ENCODE measurements at regions of chr3 and their contacts with region 1.

Region 1: DNA sequence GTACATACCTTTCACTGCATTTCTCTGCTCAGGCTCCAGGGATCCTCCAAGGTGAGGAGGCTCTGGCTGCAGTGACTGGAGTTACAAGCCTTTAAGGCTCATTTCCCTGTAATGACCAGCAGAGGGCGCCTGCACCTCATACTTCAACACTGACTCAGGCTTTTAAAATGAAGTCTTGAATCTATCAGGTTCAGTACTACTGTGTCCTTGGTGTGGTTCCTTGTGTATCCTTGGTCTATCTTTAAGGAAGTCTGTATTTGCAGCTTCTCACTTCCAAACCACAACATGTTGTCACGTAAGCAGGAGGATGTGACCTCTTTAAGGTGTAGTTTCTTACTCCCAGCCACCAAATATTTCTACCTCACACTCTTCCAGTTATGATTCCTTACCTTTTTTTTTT is 122.5 kb upstream of the ZBED2 start:
- DNase-seq: peak; percentile 27 to 83 (median 69)
- ATAC-seq: peak; percentile 90
- H3K4me3 ChIP-seq: no peak overlapping the region
- H3K4me3 Mint-ChIP-seq: no peak overlapping the region
- H3K27ac ChIP-seq: no peak overlapping the region
- H3K27ac Mint-ChIP-seq: no peak overlapping the region
- H3K4me1 ChIP-seq: no peaks in the 10 kb centered on the region
- H3K4me1 Mint-ChIP-seq: peaks cover 3% of the 10 kb centered on the region
- H3K27me3 ChIP-seq: no peaks in the 10 kb centered on the region
- H3K27me3 Mint-ChIP-seq: no peaks in the 10 kb centered on the region
- CTCF ChIP-seq: peak; percentile 77

Region 2: DNA sequence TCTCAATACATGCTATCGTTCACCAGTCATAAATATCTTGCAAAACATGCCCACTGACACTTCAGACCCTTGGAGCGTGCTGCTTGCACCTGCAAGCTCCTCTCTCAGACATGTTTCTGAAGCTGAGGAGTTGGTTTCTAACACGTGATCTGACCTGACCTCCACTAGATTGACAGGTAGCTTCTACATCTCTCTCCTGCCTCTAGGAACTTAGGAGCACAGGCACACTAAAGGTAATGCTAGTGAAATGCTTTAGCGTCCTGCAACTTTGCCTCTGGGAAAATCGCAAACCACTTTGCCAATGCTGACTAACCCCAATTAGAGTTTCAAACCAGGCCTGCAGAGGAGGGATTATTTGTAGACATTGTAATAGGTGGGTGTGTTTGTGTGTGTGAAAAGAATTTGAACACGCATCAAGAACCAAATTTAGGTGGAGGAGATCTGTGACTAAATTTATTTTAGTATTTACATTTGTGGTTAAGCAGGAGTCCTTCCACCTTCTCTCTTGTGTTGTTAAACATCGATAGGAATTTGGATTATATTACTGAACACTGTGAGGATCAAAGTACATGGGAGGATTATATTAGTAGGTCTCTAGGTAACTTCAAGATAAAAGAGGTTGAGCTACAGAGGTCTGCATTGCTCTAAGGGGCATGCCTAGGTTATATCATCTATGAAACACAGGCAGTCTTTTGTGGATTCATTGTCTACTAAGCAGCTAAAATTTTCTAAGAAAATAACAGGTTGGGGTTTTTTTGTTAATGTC is 35.8 kb before region 1 on chr3:
- CTCF ChIA-PET with region 1: interaction called, 14 read pairs
- POLR2A ChIA-PET with region 1: interaction called, 3 read pairs
- intact Hi-C with region 1: no loop called
- DNase-seq: no peak
- ATAC-seq: no peak
- H3K4me3 ChIP-seq: no peak overlapping the region
- H3K4me3 Mint-ChIP-seq: no peak overlapping the region
- H3K27ac ChIP-seq: no peak overlapping the region
- H3K27ac Mint-ChIP-seq: no peak overlapping the region
- H3K4me1 ChIP-seq: peaks cover 24% of the 10 kb centered on the region
- H3K4me1 Mint-ChIP-seq: peaks cover 76% of the 10 kb centered on the region
- H3K27me3 ChIP-seq: no peaks in the 10 kb centered on the region
- H3K27me3 Mint-ChIP-seq: no peaks in the 10 kb centered on the region
- CTCF ChIP-seq: no peak

Region 3: GRCh38 chr3:111700054-111700453 is 17.5 kb before region 1 on chr3:
- CTCF ChIA-PET with region 1: interaction called, 67 read pairs
- POLR2A ChIA-PET with region 1: interaction called, 3 read pairs
- intact Hi-C with region 1: no loop called
- DNase-seq: no peak
- ATAC-seq: no peak
- H3K4me3 ChIP-seq: no peak overlapping the region
- H3K4me3 Mint-ChIP-seq: peak overlapping the region; percentile 3
- H3K27ac ChIP-seq: no peak overlapping the region
- H3K27ac Mint-ChIP-seq: no peak overlapping the region
- H3K4me1 ChIP-seq: peaks cover 5% of the 10 kb centered on the region
- H3K4me1 Mint-ChIP-seq: peaks cover 36% of the 10 kb centered on the region
- H3K27me3 ChIP-seq: no peaks in the 10 kb centered on the region
- H3K27me3 Mint-ChIP-seq: no peaks in the 10 kb centered on the region
- CTCF ChIP-seq: no peak

Region 4: DNA sequence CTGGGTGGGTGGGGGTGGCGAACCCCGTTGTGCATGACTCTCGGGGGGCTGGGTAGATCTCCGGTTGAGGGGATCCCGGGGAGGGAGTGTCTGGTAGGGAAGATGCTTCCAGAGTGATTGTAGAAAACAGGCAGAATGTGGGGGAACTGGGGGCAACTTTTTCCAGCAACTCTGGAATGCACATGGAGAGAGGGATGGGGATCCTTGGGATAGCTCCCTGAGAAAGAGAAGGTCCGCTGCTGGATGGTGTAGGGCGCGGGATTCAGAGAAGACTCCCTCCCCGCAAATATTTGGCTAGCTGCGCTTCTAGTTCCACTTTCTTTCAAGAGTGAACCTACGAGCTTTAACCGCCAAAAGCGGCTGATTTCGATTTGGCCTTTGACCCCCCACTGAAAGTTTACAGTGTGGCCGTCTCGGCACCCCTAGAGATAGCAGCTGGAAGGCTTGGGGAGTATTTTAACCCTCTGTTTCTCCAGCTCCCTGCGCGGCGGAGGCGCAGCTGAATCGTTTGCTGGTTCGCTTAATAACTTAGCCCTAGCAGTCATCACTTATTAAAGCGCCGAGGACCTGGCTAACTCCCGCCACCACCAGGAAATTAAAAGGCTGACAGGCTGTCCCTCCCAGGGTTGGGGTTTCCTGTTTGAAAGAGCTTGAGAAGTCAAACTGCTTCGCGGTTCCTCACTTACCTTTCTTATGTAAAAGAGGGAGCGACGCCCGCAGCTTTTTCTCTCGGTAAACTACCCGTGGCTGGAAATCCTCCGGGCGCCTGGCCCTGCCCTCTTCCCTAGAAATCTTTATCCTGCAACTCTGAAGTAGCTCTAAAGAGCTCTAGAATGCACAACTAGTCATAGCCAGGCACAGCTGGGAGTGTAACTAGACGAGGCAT is 142.6 kb after region 1 on chr3:
- CTCF ChIA-PET with region 1: interaction called, 11 read pairs
- POLR2A ChIA-PET with region 1: interaction called, 5 read pairs
- intact Hi-C with region 1: loop called in 1 of 2 experiments (anchors 10 kb)
- DNase-seq: peak; percentile 10 to 86 (median 48)
- ATAC-seq: peak; percentile 39
- H3K4me3 ChIP-seq: peak overlapping the region; percentile 75 to 83
- H3K4me3 Mint-ChIP-seq: peak overlapping the region; percentile 95
- H3K27ac ChIP-seq: peak overlapping the region; percentile 40 to 76
- H3K27ac Mint-ChIP-seq: peak overlapping the region; percentile 85
- H3K4me1 ChIP-seq: peaks cover 8% of the 10 kb centered on the region
- H3K4me1 Mint-ChIP-seq: peaks cover 18% of the 10 kb centered on the region
- H3K27me3 ChIP-seq: no peaks in the 10 kb centered on the region
- H3K27me3 Mint-ChIP-seq: peaks cover 17% of the 10 kb centered on the region
- CTCF ChIP-seq: no peak

Region 5: DNA sequence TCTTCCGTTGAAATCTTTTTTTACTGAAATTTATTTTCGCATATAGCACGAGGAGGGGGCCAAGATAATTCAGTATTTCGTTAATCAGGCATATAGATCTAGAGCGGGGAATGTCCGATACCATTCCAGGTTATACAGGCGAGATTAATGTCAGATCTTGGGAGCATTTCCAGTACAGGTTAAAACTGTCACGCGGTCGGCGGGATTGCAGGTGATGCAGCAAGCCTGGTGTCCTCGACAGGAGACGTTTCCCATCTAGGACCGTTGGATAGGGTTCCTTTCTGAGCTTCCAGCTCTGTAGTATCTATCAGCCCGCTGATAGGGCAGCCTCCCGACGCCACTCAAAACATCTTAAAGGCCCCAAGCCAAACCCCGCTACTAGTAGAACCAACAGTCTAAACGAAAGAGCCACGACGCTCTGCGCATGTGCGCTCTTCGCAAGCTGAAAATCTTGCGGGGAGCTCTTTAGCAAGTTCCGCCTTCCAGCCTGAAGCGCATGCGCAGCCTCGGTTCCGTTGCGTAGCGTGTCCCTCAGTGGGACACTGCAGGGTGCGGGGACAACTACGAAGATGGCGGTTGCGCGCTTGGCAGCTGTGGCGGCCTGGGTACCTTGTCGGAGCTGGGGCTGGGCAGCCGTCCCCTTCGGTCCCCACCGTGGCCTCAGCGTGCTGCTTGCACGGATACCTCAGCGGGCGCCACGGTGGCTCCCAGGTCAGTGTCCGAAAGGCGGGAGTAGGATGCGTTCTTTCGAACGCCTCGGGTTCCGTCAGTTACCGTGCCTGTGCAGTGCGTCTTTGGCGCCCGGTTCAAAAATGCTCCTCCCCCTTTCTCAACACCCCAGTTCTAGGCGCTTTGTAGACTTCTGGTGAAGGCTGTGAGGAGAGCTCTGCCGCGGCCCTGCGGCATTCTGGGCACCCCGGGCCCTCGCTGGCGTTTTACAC is 261.2 kb after region 1 on chr3 and contains the start of gene ABHD10:
- CTCF ChIA-PET with region 1: interaction called, 379 read pairs
- POLR2A ChIA-PET with region 1: interaction called, 6 read pairs
- intact Hi-C with region 1: no loop called
- DNase-seq: peak; percentile 90 to 99 (median 97)
- ATAC-seq: peak; percentile 94
- H3K4me3 ChIP-seq: peak within 1 kb of the TSS; percentile 89
- H3K4me3 Mint-ChIP-seq: peak within 1 kb of the TSS; percentile 94
- H3K27ac ChIP-seq: peak within 1 kb of the TSS; percentile 80 to 85
- H3K27ac Mint-ChIP-seq: peak within 1 kb of the TSS; percentile 95
- H3K4me1 ChIP-seq: peaks cover 31% of the 10 kb centered on the region
- H3K4me1 Mint-ChIP-seq: peaks cover 44% of the 10 kb centered on the region
- H3K27me3 ChIP-seq: no peaks in the 10 kb centered on the region
- H3K27me3 Mint-ChIP-seq: no peaks in the 10 kb centered on the region
- CTCF ChIP-seq: no peak
- total RNA-seq, gene ABHD10: 19.8 to 26.0 TPM

Region 6: GRCh38 chr3:112007633-112008032 is 290.0 kb after region 1 on chr3:
- CTCF ChIA-PET with region 1: interaction called, 144 read pairs
- POLR2A ChIA-PET with region 1: interaction called, 3 read pairs
- intact Hi-C with region 1: no loop called
- DNase-seq: no peak
- ATAC-seq: no peak
- H3K4me3 ChIP-seq: no peak overlapping the region
- H3K4me3 Mint-ChIP-seq: no peak overlapping the region
- H3K27ac ChIP-seq: no peak overlapping the region
- H3K27ac Mint-ChIP-seq: no peak overlapping the region
- H3K4me1 ChIP-seq: peaks cover 12% of the 10 kb centered on the region
- H3K4me1 Mint-ChIP-seq: peaks cover 18% of the 10 kb centered on the region
- H3K27me3 ChIP-seq: no peaks in the 10 kb centered on the region
- H3K27me3 Mint-ChIP-seq: no peaks in the 10 kb centered on the region
- CTCF ChIP-seq: no peak

Region 7: GRCh38 chr3:112043603-112044201 is 326.1 kb after region 1 on chr3:
- CTCF ChIA-PET with region 1: interaction called, 11 read pairs
- POLR2A ChIA-PET with region 1: no interaction called
- intact Hi-C with region 1: loop called (anchors 1 kb)
- DNase-seq: peak; percentile 1 to 82 (median 47)
- ATAC-seq: peak; percentile 99
- H3K4me3 ChIP-seq: no peak overlapping the region
- H3K4me3 Mint-ChIP-seq: no peak overlapping the region
- H3K27ac ChIP-seq: no peak overlapping the region
- H3K27ac Mint-ChIP-seq: no peak overlapping the region
- H3K4me1 ChIP-seq: no peaks in the 10 kb centered on the region
- H3K4me1 Mint-ChIP-seq: no peaks in the 10 kb centered on the region
- H3K27me3 ChIP-seq: no peaks in the 10 kb centered on the region
- H3K27me3 Mint-ChIP-seq: peaks cover 2% of the 10 kb centered on the region
- CTCF ChIP-seq: peak; percentile 88

Measured in CD8-positive, alpha-beta T cell (primary cell).